Heart left ventricle (tissue), 16 donors: ENCODE measurements at regions of chr11 and their contacts with region 1.

Region 1: DNA sequence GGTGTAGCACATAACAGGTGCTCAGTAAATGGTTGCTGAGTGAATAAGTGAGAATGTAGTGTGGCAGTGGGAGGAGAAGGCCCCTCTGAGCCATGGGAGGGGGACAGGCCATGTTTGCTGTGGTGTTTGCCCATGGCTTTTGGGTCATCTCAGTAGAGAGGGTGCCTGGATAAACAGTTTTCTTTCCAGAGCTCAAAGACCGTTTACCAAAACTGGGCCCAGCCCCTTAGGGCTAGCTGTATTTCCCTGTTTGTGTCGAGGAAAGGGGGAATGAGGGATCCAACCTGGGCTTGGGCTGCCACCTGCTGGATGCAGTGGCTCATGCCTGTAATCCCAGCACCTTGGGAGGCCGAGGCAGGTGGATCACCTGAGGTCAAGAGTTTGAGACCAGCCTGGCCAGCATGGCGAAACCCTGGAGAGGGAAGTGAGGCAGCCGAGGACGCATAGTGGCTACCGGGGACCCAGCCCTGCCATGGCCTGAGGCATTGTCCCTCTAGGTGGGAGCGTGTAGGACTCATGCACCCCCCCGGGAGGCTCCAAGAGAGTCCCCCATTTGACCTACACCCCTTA is 8.7 kb upstream of the LTO1 start:
- DNase-seq: no peak
- ATAC-seq: no peak
- H3K4me3 ChIP-seq: no peak overlapping the region
- H3K27ac ChIP-seq: no peak overlapping the region
- H3K4me1 ChIP-seq: peaks cover 0 to 7% (median 0%) of the 10 kb centered on the region in 12 donors
- H3K27me3 ChIP-seq: peaks cover 0 to 13% (median 3%) of the 10 kb centered on the region in 9 donors
- CTCF ChIP-seq: peak in 7 of 12 donors; percentile 9 to 40 (median 22)
- POLR2A ChIP-seq: no peak

Region 2: DNA sequence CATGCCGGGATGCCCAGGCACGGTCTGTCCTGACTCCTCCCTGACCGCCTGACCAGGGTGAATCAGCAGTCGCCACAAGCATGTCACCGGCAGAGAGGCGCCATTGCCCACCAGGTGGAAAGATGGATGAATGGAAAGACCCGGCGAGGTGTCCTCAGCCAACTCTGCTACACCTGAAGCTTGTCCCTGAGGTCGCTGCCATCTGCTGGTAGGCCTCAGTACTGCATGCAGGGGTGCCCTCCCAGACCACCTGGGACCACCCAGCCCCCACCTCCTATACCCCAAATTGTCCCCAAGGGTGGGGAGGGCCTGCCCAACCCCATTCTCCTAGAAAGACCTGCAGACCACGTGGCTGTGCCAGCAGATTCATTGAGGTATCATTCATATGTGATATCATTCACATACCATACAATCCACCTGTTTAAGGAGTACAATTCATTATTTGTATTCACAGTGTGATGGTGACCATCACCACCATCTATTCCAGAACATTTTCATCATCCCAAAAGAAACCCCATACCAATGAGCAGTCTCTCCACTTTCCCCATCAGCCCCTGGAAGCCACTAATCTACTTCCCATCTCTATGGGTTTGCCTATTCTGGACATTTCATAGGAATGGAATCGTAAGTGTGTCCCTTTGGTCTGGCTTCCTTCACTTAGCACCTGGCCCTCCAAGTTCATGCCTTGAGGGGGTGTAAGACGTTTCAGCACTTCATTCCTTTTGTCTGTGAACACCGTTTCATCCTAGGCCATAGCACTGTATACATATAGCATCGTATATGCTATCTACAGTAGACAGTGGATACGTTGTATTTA is 117.9 kb after region 1 on chr11:
- intact Hi-C with region 1: loop called in 4 of 10 experiments (anchors 5 kb)
- DNase-seq: no peak
- ATAC-seq: no peak
- H3K4me3 ChIP-seq: no peak overlapping the region
- H3K27ac ChIP-seq: no peak overlapping the region
- H3K4me1 ChIP-seq: peaks cover 0 to 13% (median 0%) of the 10 kb centered on the region in 12 donors
- H3K27me3 ChIP-seq: peaks cover 0 to 3% (median 0%) of the 10 kb centered on the region in 9 donors
- CTCF ChIP-seq: peak; percentile 44 to 68 (median 56)
- POLR2A ChIP-seq: no peak

Region 3: DNA sequence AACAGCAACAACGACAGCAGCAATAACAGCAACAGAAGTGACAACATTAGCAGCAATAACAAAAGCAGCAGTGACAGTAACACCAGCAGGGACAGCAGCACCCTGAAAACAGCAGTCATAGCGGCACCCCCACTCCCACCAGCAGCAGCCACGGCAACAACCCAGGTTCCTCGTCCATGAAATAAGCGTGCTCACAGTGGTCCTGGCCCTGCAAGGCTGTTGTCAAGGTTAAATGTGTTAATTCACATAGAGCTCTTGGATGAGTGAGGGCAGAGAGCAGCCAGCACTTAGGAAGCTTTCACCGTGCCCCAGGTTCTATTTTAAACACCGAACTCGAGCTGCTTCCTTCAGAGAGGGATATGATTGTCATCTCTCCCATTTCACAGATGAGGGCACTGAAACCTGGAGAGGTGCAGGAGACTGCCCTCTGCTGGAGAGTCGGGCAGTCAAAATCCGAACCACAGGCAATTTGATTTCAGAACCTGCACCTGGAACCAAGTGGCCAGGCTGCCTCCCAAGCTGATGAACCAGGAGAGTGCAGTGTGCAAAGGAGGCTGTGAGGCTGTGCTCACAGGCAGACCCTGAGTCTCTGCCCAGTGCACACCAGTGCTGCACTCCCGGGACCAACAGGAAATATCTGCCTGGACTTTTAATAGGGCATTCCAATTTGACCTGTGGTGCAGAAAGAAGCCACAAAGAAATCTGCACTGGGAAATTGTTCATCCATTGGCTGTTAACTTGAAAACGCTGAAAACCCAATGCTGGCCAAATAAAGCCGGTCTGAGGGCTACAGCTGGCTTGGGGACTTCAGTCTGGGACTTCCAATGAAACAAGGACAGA is 158.2 kb after region 1 on chr11:
- intact Hi-C with region 1: loop called in 1 of 10 experiments (anchors 5 kb)
- DNase-seq: no peak
- ATAC-seq: no peak
- H3K4me3 ChIP-seq: no peak overlapping the region
- H3K27ac ChIP-seq: no peak overlapping the region
- H3K4me1 ChIP-seq: no peaks in the 10 kb centered on the region
- H3K27me3 ChIP-seq: peaks cover 0 to 24% (median 6%) of the 10 kb centered on the region in 9 donors
- CTCF ChIP-seq: peak in 9 of 12 donors; percentile 6 to 41 (median 24)
- POLR2A ChIP-seq: no peak

Region 4: GRCh38 chr11:69888483-69889076 is 204.7 kb after region 1 on chr11:
- intact Hi-C with region 1: loop called (anchors 1 to 5 kb)
- DNase-seq: peak in 2 of 5 donors; percentile 54 to 59
- ATAC-seq: peak in 2 of 4 donors; percentile 61 to 71
- H3K4me3 ChIP-seq: no peak overlapping the region
- H3K27ac ChIP-seq: no peak overlapping the region
- H3K4me1 ChIP-seq: peaks cover 0 to 8% (median 0%) of the 10 kb centered on the region in 12 donors
- H3K27me3 ChIP-seq: peaks cover 0 to 52% (median 16%) of the 10 kb centered on the region in 9 donors
- CTCF ChIP-seq: peak; percentile 74 to 95 (median 86)
- POLR2A ChIP-seq: no peak

Region 5: GRCh38 chr11:69909561-69910496 is 226.0 kb after region 1 on chr11:
- intact Hi-C with region 1: loop called in 1 of 10 experiments (anchors 5 kb)
- DNase-seq: peak in 4 of 5 donors; percentile 39 to 68 (median 43)
- ATAC-seq: peak; percentile 12 to 56 (median 37)
- H3K4me3 ChIP-seq: no peak overlapping the region
- H3K27ac ChIP-seq: no peak overlapping the region
- H3K4me1 ChIP-seq: peaks cover 0 to 21% (median 9%) of the 10 kb centered on the region in 12 donors
- H3K27me3 ChIP-seq: peaks cover 0 to 24% (median 4%) of the 10 kb centered on the region in 9 donors
- CTCF ChIP-seq: peak; percentile 42 to 72 (median 54)
- POLR2A ChIP-seq: no peak